ENCODE measurements at regions of chr9 and their contacts with region 1.

Region 1: DNA sequence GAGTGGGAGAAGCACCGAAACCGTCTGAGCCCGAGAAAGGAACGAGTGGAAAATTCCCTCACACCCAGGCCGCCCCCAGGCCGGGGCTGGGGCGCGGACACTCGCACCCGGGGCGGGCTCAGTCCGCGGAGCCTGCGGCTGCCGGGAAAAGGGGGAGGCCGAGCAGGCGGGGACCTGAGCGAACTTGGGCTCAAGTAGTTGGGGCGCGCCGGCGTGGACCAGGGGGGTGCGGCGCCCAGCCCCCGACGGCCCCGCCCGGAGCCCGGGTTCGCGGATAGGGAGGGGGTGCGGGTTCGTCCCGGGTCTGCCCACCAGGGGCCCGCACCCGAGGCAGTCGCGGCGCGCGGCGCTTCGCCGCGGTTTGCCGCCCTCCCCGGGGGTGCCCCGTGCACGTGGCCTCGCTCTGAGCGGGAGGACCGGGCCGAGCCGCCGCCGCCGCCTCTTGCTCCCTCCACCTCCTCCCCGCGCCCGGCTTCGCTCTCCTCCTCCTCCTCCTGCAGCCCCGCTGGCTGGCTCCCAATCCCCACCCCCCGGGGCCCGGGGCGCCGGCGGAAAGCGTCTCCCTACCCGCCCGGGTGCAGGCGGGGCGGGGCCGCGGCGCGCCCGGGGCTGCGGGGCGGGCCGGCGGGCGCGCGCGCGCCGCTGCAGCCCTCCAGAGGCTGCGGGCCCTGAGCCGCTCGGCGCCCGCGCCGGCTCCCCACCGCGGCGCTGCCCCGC is 1.1 kb upstream of the NFIB start:
- DNase-seq: peak; percentile 93
- H3K4me3 ChIP-seq: peak overlapping the region; percentile 74 to 88 (median 86)
- H3K27ac ChIP-seq: peak overlapping the region; percentile 93 to 99 (median 98)
- H3K4me1 ChIP-seq: peaks cover 22 to 63% (median 48%) of the 10 kb centered on the region in 4 donors
- H3K27me3 ChIP-seq: no peaks in the 10 kb centered on the region
- CTCF ChIP-seq: no peak
- EP300 ChIP-seq: no peak
- POLR2A ChIP-seq: peak; percentile 57

Region 2: GRCh38 chr9:14030375-14031059 is 284.6 kb before region 1 on chr9:
- intact Hi-C with region 1: loop called (anchors 5 kb)
- DNase-seq: no peak
- H3K4me3 ChIP-seq: peak overlapping the region; percentile 30 to 48 (median 40)
- H3K27ac ChIP-seq: peak overlapping the region; percentile 77 to 85 (median 80)
- H3K4me1 ChIP-seq: peaks cover 40 to 51% (median 47%) of the 10 kb centered on the region in 4 donors
- H3K27me3 ChIP-seq: no peaks in the 10 kb centered on the region
- CTCF ChIP-seq: no peak
- EP300 ChIP-seq: no peak
- POLR2A ChIP-seq: no peak

Region 3: GRCh38 chr9:14203356-14204056 is 111.6 kb before region 1 on chr9:
- intact Hi-C with region 1: loop called (anchors 5 kb)
- DNase-seq: no peak
- H3K4me3 ChIP-seq: peak overlapping the region in 2 of 4 donors; percentile 21 to 38
- H3K27ac ChIP-seq: peak overlapping the region; percentile 67 to 78 (median 72)
- H3K4me1 ChIP-seq: peaks cover 59 to 86% (median 81%) of the 10 kb centered on the region in 4 donors
- H3K27me3 ChIP-seq: no peaks in the 10 kb centered on the region
- CTCF ChIP-seq: no peak
- EP300 ChIP-seq: no peak
- POLR2A ChIP-seq: no peak

Region 4: DNA sequence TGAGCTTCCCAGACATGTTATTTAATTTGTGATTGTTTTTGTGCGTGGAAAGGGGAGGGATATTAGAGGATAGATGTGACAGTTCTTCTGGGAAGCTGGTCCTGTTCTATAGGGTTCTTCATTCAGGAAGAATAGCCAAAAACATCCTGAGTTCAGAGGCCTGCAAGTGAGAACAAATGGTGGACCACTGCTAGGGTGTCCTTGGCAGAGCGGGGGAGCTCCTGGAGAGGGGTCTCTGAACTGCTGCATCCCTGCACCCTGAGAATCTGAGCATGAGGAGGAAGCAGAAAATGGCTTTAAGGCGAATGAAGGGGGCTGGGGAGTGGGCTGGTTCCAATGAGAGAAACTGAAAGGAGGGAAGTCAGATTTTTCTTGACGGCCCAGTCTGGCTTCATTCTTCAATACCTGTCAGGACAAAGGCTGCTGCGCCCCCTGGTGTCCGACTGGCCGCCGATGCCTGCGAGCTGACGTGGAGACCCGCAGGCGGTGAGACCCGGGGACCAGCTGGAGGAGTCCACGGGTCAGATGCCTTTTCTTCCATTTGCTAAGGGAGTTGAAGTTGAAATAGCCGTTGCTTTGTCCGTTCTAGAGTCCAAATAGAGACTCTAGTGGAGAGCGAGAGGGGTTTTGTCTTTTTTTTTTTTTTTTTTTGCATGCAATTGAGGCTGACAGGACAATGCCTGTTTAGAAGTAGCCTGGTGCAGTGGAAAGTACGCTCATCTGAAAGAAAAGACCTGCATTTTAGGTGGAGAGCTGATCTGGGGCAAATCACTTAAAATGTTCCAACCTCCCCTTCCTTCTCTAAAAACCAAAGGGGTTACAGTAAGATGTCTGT is 38.4 kb after region 1 on chr9:
- intact Hi-C with region 1: loop called (anchors 5 kb)
- DNase-seq: peak; percentile 98
- H3K4me3 ChIP-seq: peak overlapping the region; percentile 15 to 44 (median 33)
- H3K27ac ChIP-seq: peak overlapping the region; percentile 50 to 67 (median 62)
- H3K4me1 ChIP-seq: peaks cover 43 to 62% (median 52%) of the 10 kb centered on the region in 4 donors
- H3K27me3 ChIP-seq: peaks cover 0 to 19% (median 10%) of the 10 kb centered on the region in 4 donors
- CTCF ChIP-seq: peak; percentile 88 to 96 (median 90)
- EP300 ChIP-seq: no peak
- POLR2A ChIP-seq: no peak